ENCODE measurements at regions of chr4 and their contacts with region 1.

Region 1: GRCh38 chr4:153127760-153128494 is 76.3 kb upstream of the TRIM2 start:
- DNase-seq: peak; percentile 92
- ATAC-seq: peak; percentile 90
- H3K4me3 Mint-ChIP-seq: no peak overlapping the region
- H3K27ac Mint-ChIP-seq: no peak overlapping the region
- H3K4me1 Mint-ChIP-seq: peaks cover 4% of the 10 kb centered on the region
- H3K27me3 Mint-ChIP-seq: peaks cover 2% of the 10 kb centered on the region
- CTCF ChIP-seq: peak; percentile 83

Region 2: GRCh38 chr4:152779513-152780266 is 348.2 kb before region 1 on chr4 and contains the starts of genes ARFIP1 and TIGD4:
- CTCF ChIA-PET with region 1: interaction called, 14 read pairs
- POLR2A ChIA-PET with region 1: no interaction called
- intact Hi-C with region 1: no loop called
- DNase-seq: peak; percentile 96
- ATAC-seq: peak; percentile 89
- H3K4me3 Mint-ChIP-seq: peak within 1 kb of the TSS; percentile 97
- H3K27ac Mint-ChIP-seq: peak within 1 kb of the TSS; percentile 92
- H3K4me1 Mint-ChIP-seq: peaks cover 38% of the 10 kb centered on the region
- H3K27me3 Mint-ChIP-seq: peaks cover 8% of the 10 kb centered on the region
- CTCF ChIP-seq: no peak
- total RNA-seq, gene ARFIP1: 7.2 to 8.9 TPM
- total RNA-seq, gene TIGD4: 0.27 to 0.47 TPM

Region 3: DNA sequence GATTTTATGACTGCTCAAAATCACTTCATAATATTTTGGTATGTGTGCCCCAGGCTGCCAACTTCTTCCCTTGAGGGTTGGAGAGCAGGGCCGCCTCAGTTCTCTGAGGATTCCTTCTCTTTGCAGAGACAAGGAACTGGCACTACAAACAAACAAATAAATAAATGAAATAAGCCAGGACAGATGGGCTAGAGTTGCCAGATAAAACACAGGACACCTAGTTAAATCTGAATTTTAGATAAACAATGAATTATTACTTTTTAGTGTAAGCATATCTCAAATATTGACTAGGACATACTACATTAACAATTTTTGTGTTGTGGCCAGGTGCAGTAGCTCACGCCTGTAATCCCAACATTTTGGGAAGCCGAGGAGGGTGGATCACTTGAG is 69.3 kb before region 1 on chr4:
- CTCF ChIA-PET with region 1: no interaction called
- POLR2A ChIA-PET with region 1: no interaction called
- intact Hi-C with region 1: no loop called
- DNase-seq: no peak
- ATAC-seq: no peak
- H3K4me3 Mint-ChIP-seq: no peak overlapping the region
- H3K27ac Mint-ChIP-seq: no peak overlapping the region
- H3K4me1 Mint-ChIP-seq: no peaks in the 10 kb centered on the region
- H3K27me3 Mint-ChIP-seq: peaks cover 17% of the 10 kb centered on the region
- CTCF ChIP-seq: no peak

Region 4: DNA sequence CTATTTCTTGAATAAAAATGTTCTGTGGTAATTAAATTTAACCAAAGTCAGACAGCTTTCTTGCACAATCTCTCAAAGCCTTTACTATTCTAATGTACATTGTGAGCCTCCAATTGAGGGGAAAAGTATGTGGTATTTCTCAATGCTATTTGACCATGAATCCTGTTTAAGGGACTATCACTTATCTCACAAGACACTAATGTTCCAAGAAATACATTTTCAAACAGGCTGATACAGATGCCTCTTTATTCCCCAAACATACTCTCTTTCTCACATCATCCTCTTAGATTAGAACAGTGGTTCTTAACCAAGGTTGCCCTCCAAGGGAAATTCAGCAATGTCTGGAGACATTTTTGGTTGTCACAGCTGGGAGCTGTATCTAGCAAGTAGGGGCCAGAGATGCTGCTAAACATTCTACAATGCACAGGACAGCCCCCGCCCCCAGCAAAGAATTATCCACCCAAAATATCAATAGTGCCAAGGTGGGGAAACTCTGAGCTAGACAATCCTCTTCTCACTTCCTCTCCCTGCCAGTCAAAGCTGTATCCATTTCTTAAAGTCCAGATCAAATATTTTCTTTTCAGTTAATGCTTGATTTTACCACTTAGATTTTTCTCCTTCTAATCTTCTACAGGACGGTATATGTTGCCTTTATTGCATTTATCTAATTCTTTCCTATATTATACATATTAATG is 52.8 kb before region 1 on chr4:
- CTCF ChIA-PET with region 1: interaction called, 428 read pairs
- POLR2A ChIA-PET with region 1: no interaction called
- intact Hi-C with region 1: no loop called
- DNase-seq: no peak
- ATAC-seq: no peak
- H3K4me3 Mint-ChIP-seq: no peak overlapping the region
- H3K27ac Mint-ChIP-seq: no peak overlapping the region
- H3K4me1 Mint-ChIP-seq: no peaks in the 10 kb centered on the region
- H3K27me3 Mint-ChIP-seq: no peaks in the 10 kb centered on the region
- CTCF ChIP-seq: no peak

Region 5: DNA sequence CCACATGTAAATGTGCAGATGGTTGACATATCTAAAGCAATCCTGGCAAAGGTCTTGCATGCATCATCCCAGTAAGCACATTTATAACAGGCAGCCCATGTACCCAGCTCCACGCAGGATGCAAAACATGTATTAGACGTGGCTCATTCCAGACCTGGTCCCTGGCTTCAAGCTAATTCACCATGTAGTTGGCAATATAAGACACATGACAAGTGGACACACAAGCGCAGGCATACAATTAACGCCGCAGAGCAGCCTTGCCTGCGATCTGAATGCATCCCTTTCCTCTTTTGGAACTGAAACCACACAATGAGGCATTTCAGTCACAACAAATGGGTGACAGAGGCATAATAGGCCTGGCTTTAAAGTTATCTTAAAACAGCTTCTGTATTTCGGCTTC is 38.2 kb before region 1 on chr4:
- CTCF ChIA-PET with region 1: interaction called, 428 read pairs
- POLR2A ChIA-PET with region 1: interaction called, 4 read pairs
- intact Hi-C with region 1: no loop called
- DNase-seq: no peak
- ATAC-seq: no peak
- H3K4me3 Mint-ChIP-seq: no peak overlapping the region
- H3K27ac Mint-ChIP-seq: no peak overlapping the region
- H3K4me1 Mint-ChIP-seq: peaks cover 17% of the 10 kb centered on the region
- H3K27me3 Mint-ChIP-seq: peaks cover 3% of the 10 kb centered on the region
- CTCF ChIP-seq: no peak

Region 6: DNA sequence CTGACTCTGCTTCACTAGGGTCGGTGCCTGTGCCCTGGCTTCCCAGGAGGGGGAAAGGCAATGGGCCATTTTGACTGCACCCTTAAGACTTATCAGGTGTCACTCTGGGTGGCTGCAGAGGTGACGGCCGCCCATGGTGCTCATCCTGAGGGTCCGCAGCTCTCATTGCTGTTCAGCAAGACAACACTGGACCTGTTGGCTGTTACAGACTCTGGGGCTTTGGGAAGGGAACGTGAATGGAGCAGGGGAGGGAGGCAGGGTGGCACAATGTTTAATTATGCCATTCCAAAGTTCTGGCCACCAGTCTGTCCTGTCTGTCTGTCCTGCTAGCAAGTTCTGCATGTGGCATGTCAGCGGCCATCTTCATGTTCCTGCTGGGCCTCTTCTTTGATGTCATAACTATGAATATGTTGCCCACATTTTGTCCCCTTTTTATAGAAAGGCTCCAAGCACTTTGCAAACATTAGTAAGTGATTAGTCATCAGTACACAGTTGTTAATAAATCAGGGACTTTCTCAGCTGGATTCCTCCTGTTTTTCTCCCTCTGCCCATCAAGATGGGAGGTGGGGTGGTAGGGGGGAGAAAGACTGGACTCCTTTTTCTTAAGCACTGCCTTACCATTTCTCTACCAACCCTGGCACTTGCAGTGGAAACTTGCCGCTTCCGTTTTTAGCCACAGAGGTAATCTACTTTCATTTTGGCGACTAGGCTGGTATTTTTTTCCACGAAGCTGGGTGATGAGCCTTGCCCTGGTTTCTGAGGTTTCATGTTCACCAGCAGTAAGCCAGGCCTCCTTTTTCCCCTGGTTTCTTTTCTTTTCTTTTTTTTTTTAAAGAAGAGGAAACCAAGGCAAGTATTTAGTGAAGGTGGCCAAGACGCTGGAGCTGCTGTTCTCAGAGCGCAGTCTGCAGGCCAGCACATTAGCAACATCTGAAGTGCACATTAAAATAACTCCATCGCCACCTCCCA is 12.3 kb before region 1 on chr4:
- CTCF ChIA-PET with region 1: interaction called, 114 read pairs
- POLR2A ChIA-PET with region 1: interaction called, 4 read pairs
- intact Hi-C with region 1: no loop called
- DNase-seq: peak; percentile 88
- ATAC-seq: peak; percentile 64
- H3K4me3 Mint-ChIP-seq: peak overlapping the region; percentile 31
- H3K27ac Mint-ChIP-seq: no peak overlapping the region
- H3K4me1 Mint-ChIP-seq: peaks cover 14% of the 10 kb centered on the region
- H3K27me3 Mint-ChIP-seq: no peaks in the 10 kb centered on the region
- CTCF ChIP-seq: no peak

Region 7: DNA sequence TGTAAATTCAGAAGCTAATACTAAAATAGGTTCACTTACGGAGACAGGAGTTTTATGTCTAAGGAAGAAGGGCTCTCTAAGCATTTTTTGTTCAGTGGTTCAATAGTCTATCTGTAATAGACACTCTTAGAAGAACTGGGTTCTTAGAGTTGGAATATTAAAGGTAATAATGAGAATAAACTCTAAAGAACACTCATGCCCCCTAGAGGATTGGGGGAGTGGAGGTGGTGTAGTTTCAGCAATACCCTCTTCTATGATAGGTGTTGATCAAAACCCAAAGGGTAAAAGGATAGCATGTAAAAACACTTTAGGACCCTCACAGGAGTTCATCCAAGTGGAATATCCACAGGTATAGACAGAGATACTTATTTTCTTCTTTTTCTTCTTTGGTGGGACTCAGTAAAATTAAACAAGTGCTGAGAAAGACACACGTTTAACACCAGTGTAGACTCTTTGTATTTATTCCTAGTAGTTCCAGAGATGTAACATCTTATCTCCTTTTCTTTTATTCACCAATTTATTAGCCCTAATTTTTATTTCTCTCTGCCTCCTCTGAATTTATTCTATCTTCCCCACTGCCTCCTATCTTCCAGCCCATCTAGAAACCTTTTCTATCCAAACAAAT is 190.9 kb after region 1 on chr4:
- CTCF ChIA-PET with region 1: interaction called, 11 read pairs
- POLR2A ChIA-PET with region 1: no interaction called
- intact Hi-C with region 1: no loop called
- DNase-seq: peak; percentile 43
- ATAC-seq: peak; percentile 56
- H3K4me3 Mint-ChIP-seq: no peak overlapping the region
- H3K27ac Mint-ChIP-seq: no peak overlapping the region
- H3K4me1 Mint-ChIP-seq: no peaks in the 10 kb centered on the region
- H3K27me3 Mint-ChIP-seq: no peaks in the 10 kb centered on the region
- CTCF ChIP-seq: peak; percentile 82